ENCODE measurements at regions of chr12 and their contacts with region 1.

Region 1: GRCh38 chr12:71636704-71637115 is 26.9 kb downstream of the ZFC3H1 start:
- DNase-seq: peak; percentile 34
- ATAC-seq: peak; percentile 47
- H3K4me3 Mint-ChIP-seq: no peak overlapping the region
- H3K27ac Mint-ChIP-seq: peak overlapping the region; percentile 28
- H3K4me1 Mint-ChIP-seq: peaks cover 7% of the 10 kb centered on the region
- H3K27me3 Mint-ChIP-seq: no peaks in the 10 kb centered on the region

Region 2: DNA sequence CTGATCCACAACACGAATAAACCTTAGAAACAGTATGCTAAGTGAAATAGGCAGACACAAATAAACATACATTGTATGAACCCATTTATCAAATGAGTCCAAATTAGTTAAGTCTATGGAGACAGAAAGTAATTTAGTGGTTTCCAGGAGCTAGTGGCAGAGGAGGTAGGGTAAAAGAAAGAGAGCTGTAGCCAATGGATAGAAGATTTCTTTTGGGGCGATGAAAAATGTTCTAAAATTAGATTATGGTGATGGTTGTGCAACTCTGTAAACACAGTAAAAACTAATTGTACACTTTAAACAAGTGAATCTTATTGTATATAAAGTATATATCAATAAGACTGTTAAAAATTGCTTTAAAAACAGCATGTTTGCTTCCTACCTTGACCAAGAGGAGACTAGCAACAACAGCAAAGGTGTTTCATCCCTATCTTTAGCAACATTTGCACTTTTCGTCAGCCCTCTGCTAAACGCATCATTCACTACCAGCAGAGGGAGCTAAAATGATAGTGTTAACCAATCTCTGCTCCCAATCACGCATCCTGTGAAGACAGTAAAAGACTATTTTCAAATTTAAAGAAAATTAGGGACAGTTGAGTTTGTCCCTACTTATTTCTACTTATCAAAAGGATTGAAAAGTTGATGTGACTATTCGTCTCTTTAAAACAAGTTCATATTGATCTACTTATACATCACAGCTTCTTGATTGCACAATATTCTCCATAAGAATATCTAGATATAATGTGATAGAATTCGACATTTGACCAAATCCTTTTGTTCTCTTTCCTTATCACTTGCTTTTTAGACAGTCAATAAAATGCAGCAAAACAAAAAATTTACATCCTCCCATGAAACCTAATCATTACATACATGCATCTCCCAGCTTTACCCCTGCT is 221.1 kb before region 1 on chr12:
- CTCF ChIA-PET with region 1: interaction called, 25 read pairs
- POLR2A ChIA-PET with region 1: no interaction called
- DNase-seq: peak; percentile 36
- ATAC-seq: peak; percentile 61
- H3K4me3 Mint-ChIP-seq: no peak overlapping the region
- H3K27ac Mint-ChIP-seq: no peak overlapping the region
- H3K4me1 Mint-ChIP-seq: no peaks in the 10 kb centered on the region
- H3K27me3 Mint-ChIP-seq: peaks cover 7% of the 10 kb centered on the region

Region 3: GRCh38 chr12:71626098-71626497 is 10.6 kb before region 1 on chr12:
- CTCF ChIA-PET with region 1: interaction called, 46 read pairs
- POLR2A ChIA-PET with region 1: interaction called, 3 read pairs
- DNase-seq: no peak
- ATAC-seq: no peak
- H3K4me3 Mint-ChIP-seq: peak overlapping the region; percentile 7
- H3K27ac Mint-ChIP-seq: peak overlapping the region; percentile 56
- H3K4me1 Mint-ChIP-seq: peaks cover 13% of the 10 kb centered on the region
- H3K27me3 Mint-ChIP-seq: no peaks in the 10 kb centered on the region

Region 4: DNA sequence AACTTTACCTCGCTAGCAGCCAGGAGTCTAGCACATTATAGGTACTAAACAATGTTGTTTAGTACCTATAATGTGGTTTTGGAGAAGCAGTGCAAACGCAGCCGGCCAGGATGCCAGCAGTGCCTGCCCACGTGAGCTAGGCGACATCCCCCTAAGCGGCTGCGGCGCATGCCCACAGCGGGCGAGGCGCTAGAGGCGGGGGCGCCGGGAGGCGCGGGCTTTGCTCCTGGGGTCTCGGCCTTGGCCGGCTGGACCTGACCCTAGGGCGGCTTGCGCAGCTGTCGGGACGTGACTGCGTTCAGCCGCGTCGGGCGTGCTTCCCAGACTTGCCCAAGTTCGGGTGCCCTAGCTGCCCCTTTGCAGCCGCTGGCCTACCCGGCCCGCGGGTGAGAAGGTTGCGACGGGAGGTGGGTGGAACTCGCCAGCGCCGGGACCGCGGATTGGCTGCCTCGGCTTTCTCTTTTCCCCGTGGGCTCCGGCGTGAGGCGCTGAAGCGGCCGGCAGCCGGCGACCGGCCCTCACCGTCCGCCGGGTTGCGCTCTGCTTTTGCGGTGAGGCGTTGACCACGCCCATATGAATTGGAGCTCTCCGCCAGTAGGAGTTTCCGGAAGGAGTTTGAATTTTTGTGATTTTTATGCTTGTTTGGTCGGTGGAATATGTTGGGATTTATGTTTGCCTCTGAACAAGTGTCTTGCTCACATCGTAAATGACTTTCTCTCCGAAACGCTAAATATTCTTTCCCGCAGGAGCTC is 49.4 kb after region 1 on chr12 and contains the start of gene TMEM19:
- CTCF ChIA-PET with region 1: interaction called, 13 read pairs
- POLR2A ChIA-PET with region 1: interaction called, 6 read pairs
- DNase-seq: peak; percentile 86
- ATAC-seq: peak; percentile 93
- H3K4me3 Mint-ChIP-seq: peak within 1 kb of the TSS; percentile 92
- H3K27ac Mint-ChIP-seq: peak within 1 kb of the TSS; percentile 95
- H3K4me1 Mint-ChIP-seq: peaks cover 30% of the 10 kb centered on the region
- H3K27me3 Mint-ChIP-seq: no peaks in the 10 kb centered on the region
- total RNA-seq, gene TMEM19: 22.1 to 23.9 TPM

Region 5: GRCh38 chr12:71754461-71755145 is 117.9 kb after region 1 on chr12 and contains the start of gene RAB21:
- CTCF ChIA-PET with region 1: interaction called, 37 read pairs
- POLR2A ChIA-PET with region 1: no interaction called
- DNase-seq: peak; percentile 99
- ATAC-seq: peak; percentile 96
- H3K4me3 Mint-ChIP-seq: peak within 1 kb of the TSS; percentile 93
- H3K27ac Mint-ChIP-seq: peak within 1 kb of the TSS; percentile 95
- H3K4me1 Mint-ChIP-seq: peaks cover 27% of the 10 kb centered on the region
- H3K27me3 Mint-ChIP-seq: peaks cover 19% of the 10 kb centered on the region
- total RNA-seq, gene RAB21: 55.7 to 56.3 TPM

Region 6: GRCh38 chr12:72017054-72017651 is 380.4 kb after region 1 on chr12:
- CTCF ChIA-PET with region 1: no interaction called
- POLR2A ChIA-PET with region 1: no interaction called
- DNase-seq: peak; percentile 68
- ATAC-seq: peak; percentile 87
- H3K4me3 Mint-ChIP-seq: no peak overlapping the region
- H3K27ac Mint-ChIP-seq: no peak overlapping the region
- H3K4me1 Mint-ChIP-seq: no peaks in the 10 kb centered on the region
- H3K27me3 Mint-ChIP-seq: peaks cover 9% of the 10 kb centered on the region